ENCODE measurements at regions of chr2 and their contacts with region 1.

Region 1: GRCh38 chr2:20015472-20016083 is 3.1 kb upstream of the MATN3 start:
- DNase-seq: peak; percentile 72
- CTCF ChIP-seq: peak; percentile 57

Region 2: GRCh38 chr2:20097879-20098714 is 82.5 kb after region 1 on chr2:
- in situ Hi-C with region 1: loop called (anchors 10 kb)
- DNase-seq: peak; percentile 89
- CTCF ChIP-seq: peak; percentile 90